ENCODE measurements at regions of chr9 and their contacts with region 1.

Region 1: GRCh38 chr9:114405294-114406034 is 17.7 kb upstream of the AKNA start:
- DNase-seq: peak; percentile 75
- H3K4me3 ChIP-seq: no peak overlapping the region
- H3K27ac ChIP-seq: no peak overlapping the region
- H3K4me1 ChIP-seq: no peaks in the 10 kb centered on the region
- H3K27me3 ChIP-seq: peaks cover 0 to 2% of the 10 kb centered on the region in 2 experiments
- CTCF ChIP-seq: peak; percentile 75 to 84
- POLR2A ChIP-seq: no peak

Region 2: GRCh38 chr9:114250235-114250568 is 155.3 kb before region 1 on chr9:
- CTCF ChIA-PET with region 1: no interaction called
- POLR2A ChIA-PET with region 1: no interaction called
- dilution Hi-C with region 1: no loop called
- intact Hi-C with region 1: no loop called
- DNase-seq: no peak
- H3K4me3 ChIP-seq: no peak overlapping the region
- H3K27ac ChIP-seq: no peak overlapping the region
- H3K4me1 ChIP-seq: no peaks in the 10 kb centered on the region
- H3K27me3 ChIP-seq: no peaks in the 10 kb centered on the region
- CTCF ChIP-seq: no peak
- POLR2A ChIP-seq: no peak

Region 3: GRCh38 chr9:114339130-114339908 is 66.1 kb before region 1 on chr9:
- CTCF ChIA-PET with region 1: interaction called, 11 read pairs
- POLR2A ChIA-PET with region 1: no interaction called
- dilution Hi-C with region 1: no loop called
- intact Hi-C with region 1: loop called (anchors 1 kb)
- DNase-seq: peak; percentile 29
- H3K4me3 ChIP-seq: no peak overlapping the region
- H3K27ac ChIP-seq: no peak overlapping the region
- H3K4me1 ChIP-seq: no peaks in the 10 kb centered on the region
- H3K27me3 ChIP-seq: no peaks in the 10 kb centered on the region
- CTCF ChIP-seq: peak; percentile 88 to 89
- POLR2A ChIP-seq: no peak

Region 4: DNA sequence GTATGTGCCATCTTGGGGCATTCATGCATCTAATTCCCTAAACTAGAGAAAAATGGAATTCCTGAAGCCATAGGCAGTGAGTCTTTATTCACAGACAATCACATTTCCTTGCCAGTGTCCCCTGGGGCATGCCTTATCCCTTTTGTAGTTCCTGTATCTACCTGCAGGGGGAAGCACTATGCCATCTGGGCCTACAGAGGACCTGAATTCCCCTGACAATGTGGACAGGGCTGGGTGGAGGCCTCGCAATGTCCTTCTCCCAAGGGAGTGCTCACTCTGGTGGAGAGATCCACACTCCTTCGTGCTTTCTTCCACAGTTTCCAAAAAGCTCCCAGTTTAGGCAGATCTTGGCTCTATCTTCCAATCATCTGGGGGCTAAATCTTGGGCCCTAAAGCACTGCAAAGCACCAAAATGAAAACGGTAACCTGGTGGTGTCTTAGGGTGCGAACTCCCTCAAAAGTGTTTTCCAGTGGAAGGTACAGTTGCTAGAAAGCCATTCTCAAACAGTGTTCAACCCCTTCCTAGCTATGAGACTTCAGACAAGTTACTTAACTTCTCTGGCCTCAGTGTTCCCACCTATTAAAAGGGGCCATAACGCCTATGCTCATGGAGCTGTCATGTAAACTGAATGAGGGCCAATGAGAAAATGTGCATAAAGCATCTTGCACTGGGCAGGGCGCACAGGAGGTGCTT is 82.3 kb after region 1 on chr9:
- CTCF ChIA-PET with region 1: interaction called, 15 read pairs
- POLR2A ChIA-PET with region 1: no interaction called
- dilution Hi-C with region 1: no loop called
- intact Hi-C with region 1: loop called (anchors 1 kb)
- DNase-seq: peak; percentile 70
- H3K4me3 ChIP-seq: no peak overlapping the region
- H3K27ac ChIP-seq: no peak overlapping the region
- H3K4me1 ChIP-seq: no peaks in the 10 kb centered on the region
- H3K27me3 ChIP-seq: peaks cover 2% of the 10 kb centered on the region in 2 experiments
- CTCF ChIP-seq: peak; percentile 80 to 90
- POLR2A ChIP-seq: no peak

Region 5: GRCh38 chr9:114587385-114588202 is 182.1 kb after region 1 on chr9 and contains the start of gene ATP6V1G1:
- CTCF ChIA-PET with region 1: interaction called, 28 read pairs
- POLR2A ChIA-PET with region 1: no interaction called
- dilution Hi-C with region 1: no loop called
- intact Hi-C with region 1: loop called (anchors 1 kb)
- DNase-seq: peak; percentile 99
- H3K4me3 ChIP-seq: peak within 1 kb of the TSS; percentile 24 to 79 (median 73)
- H3K27ac ChIP-seq: peak within 1 kb of the TSS; percentile 66
- H3K4me1 ChIP-seq: peaks cover 23% of the 10 kb centered on the region
- H3K27me3 ChIP-seq: no peaks in the 10 kb centered on the region
- CTCF ChIP-seq: peak in 1 of 2 donors; percentile 11
- POLR2A ChIP-seq: peak; percentile 91
- total RNA-seq, gene ATP6V1G1: 78.9 and 82.0 TPM in 2 replicates

Region 6: GRCh38 chr9:114738581-114739316 is 333.3 kb after region 1 on chr9:
- CTCF ChIA-PET with region 1: interaction called, 8 read pairs
- POLR2A ChIA-PET with region 1: no interaction called
- dilution Hi-C with region 1: no loop called
- intact Hi-C with region 1: loop called (anchors 2 kb)
- DNase-seq: peak; percentile 89
- H3K4me3 ChIP-seq: no peak overlapping the region
- H3K27ac ChIP-seq: peak overlapping the region; percentile 23
- H3K4me1 ChIP-seq: peaks cover 4% of the 10 kb centered on the region
- H3K27me3 ChIP-seq: no peaks in the 10 kb centered on the region
- CTCF ChIP-seq: peak; percentile 69 to 90
- POLR2A ChIP-seq: no peak

Region 7: DNA sequence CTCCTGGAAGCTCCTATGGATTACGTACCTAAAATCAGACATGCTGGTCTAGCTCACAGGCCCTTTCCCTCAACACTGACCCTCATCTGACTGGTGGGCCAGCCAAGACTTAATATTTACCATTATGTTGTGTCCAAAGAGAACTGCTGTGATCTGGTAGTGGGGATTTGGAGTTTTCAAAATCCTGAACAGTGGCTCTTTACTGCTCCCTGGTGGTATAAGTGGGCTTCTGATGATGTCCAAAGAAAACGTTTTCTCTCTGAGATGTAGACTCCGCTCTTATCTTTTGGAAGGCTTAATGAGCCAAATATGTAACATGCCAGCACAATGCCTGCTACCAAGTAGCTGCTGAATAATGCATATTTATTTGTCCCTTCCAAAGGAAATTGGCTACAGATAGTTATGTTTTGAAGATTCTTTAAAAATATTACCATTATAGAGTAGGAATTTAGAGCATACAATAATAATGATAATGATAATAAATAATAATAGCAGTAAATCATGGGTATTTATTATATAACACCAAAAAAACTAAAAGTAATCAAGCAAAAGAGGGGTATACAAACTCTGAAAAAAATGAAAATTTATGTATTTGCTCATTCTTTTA is 1119.1 kb after region 1 on chr9:
- CTCF ChIA-PET with region 1: interaction called, 4 read pairs
- POLR2A ChIA-PET with region 1: no interaction called
- dilution Hi-C with region 1: no loop called
- intact Hi-C with region 1: loop called (anchors 5 kb)
- DNase-seq: peak; percentile 8
- H3K4me3 ChIP-seq: no peak overlapping the region
- H3K27ac ChIP-seq: no peak overlapping the region
- H3K4me1 ChIP-seq: no peaks in the 10 kb centered on the region
- H3K27me3 ChIP-seq: no peaks in the 10 kb centered on the region
- CTCF ChIP-seq: peak; percentile 26 to 50
- POLR2A ChIP-seq: no peak

Measured in endothelial cell of umbilical vein (primary cell).